ENCODE measurements at regions of chr12 and their contacts with region 1.

Region 1: DNA sequence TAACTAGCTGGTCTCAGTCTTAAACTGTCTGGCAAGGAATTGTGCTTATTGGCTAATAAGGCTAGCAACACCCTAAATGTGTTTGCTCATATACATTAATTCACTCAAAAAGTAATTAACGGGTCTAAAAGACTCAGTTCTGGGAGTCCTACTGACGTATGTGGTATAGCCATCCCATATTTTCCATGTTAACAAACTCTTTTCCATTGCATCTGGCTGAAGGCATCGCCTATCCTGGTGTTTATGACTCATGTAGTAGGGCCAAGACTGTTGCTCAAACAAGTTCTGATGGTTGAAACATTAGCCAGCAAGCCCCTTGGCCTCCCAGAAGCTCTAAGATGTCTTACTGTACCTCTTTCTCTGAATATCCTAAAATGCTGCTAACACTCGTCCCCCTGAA is 98.5 kb downstream of the PHLDA1 start:
- DNase-seq: no peak
- H3K4me3 Mint-ChIP-seq: no peak overlapping the region
- H3K27ac Mint-ChIP-seq: no peak overlapping the region
- H3K4me1 Mint-ChIP-seq: peaks cover 20% of the 10 kb centered on the region
- H3K27me3 Mint-ChIP-seq: no peaks in the 10 kb centered on the region

Region 2: DNA sequence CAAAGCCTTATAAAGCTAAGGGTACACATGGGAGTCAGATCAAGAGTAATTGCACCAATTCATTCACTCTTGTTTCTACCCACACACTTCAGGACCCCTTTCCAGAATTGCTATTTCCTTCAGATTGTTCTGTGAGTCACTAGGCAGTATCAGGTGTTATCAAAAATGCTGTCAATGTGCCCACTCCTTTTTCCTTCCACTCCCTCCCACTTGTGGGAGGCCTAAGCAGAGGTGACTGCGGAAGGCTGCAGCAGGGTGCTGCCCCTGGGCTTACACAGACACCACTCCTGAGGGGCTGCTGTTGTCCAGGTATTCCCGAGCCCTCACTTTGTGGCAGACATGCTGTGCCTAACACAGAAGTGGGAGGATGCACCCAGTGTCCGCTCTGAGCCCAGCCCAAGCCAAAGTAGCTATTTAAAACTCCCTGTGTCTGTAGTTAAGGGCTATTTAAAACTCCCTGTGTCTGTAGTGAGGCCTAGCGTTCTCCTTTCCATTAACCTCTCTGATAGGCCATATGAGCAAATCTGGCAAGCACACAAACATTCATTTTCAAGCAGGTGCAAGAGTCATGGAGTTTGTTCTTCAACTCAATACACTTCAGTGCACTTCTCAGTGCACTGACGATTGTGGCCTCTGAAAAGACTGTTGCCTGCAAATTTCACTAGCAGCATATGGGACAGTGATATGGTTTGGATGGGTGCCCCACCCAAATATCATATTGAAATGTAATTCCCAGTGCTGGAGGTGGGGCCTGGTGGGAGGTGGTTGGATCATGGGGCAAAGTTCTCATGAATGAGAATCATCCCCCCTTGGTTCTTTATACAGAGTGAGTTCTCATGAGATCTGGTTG is 19.4 kb before region 1 on chr12:
- CTCF ChIA-PET with region 1: interaction called, 5 read pairs
- POLR2A ChIA-PET with region 1: interaction called, 3 read pairs
- intact Hi-C with region 1: loop called (anchors 1 kb)
- DNase-seq: peak; percentile 73
- H3K4me3 Mint-ChIP-seq: no peak overlapping the region
- H3K27ac Mint-ChIP-seq: peak overlapping the region; percentile 9
- H3K4me1 Mint-ChIP-seq: peaks cover 28% of the 10 kb centered on the region
- H3K27me3 Mint-ChIP-seq: no peaks in the 10 kb centered on the region

Region 3: GRCh38 chr12:75944097-75944904 is 11.2 kb after region 1 on chr12:
- CTCF ChIA-PET with region 1: interaction called, 11 read pairs
- POLR2A ChIA-PET with region 1: interaction called, 19 read pairs
- intact Hi-C with region 1: loop called (anchors 1 kb)
- DNase-seq: peak; percentile 42
- H3K4me3 Mint-ChIP-seq: peak overlapping the region; percentile 34
- H3K27ac Mint-ChIP-seq: peak overlapping the region; percentile 95
- H3K4me1 Mint-ChIP-seq: peaks cover 29% of the 10 kb centered on the region
- H3K27me3 Mint-ChIP-seq: no peaks in the 10 kb centered on the region

Region 4: GRCh38 chr12:75994186-75994731 is 61.2 kb after region 1 on chr12:
- CTCF ChIA-PET with region 1: no interaction called
- POLR2A ChIA-PET with region 1: no interaction called
- intact Hi-C with region 1: loop called (anchors 1 kb)
- DNase-seq: peak; percentile 45
- H3K4me3 Mint-ChIP-seq: no peak overlapping the region
- H3K27ac Mint-ChIP-seq: peak overlapping the region; percentile 70
- H3K4me1 Mint-ChIP-seq: peaks cover 29% of the 10 kb centered on the region
- H3K27me3 Mint-ChIP-seq: no peaks in the 10 kb centered on the region

Region 5: GRCh38 chr12:76274420-76275083 is 341.5 kb after region 1 on chr12:
- CTCF ChIA-PET with region 1: no interaction called
- POLR2A ChIA-PET with region 1: no interaction called
- intact Hi-C with region 1: loop called (anchors 1 kb)
- DNase-seq: peak; percentile 59
- H3K4me3 Mint-ChIP-seq: no peak overlapping the region
- H3K27ac Mint-ChIP-seq: no peak overlapping the region
- H3K4me1 Mint-ChIP-seq: peaks cover 12% of the 10 kb centered on the region
- H3K27me3 Mint-ChIP-seq: peaks cover 14% of the 10 kb centered on the region